Left colon (tissue), 2 donors: ENCODE measurements at regions of chr13 and their contacts with region 1.

Region 1: DNA sequence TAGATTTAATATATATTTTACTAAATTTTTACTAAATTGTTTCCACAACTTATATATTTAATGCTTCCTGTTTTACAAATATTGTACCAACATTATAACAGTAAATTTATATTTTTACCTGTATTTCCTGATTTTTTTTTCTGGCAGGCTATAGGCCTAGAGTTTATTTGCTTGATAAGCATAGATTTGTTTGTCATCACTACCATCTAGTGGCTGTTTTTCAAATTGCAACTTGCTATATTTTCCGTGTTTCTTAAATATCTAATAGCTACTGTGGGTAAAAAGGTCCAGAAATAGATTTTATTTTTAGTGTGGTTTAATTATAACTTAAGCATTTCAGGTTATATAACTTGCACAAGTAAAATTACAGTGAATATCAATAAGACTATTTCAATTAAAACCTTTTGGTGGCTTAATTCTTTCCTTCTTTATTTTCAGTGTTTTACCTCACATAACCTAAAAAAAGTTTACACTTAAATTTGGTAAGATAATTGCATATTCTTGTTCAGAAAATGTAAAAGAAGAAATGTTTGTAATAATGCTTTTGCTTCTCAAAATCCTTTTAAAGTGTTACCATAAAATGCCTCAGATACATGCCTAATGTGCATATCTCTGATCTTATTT is 60.6 kb downstream of the NDFIP2 start:
- DNase-seq: no peak
- ATAC-seq: peak; percentile 58

Region 2: DNA sequence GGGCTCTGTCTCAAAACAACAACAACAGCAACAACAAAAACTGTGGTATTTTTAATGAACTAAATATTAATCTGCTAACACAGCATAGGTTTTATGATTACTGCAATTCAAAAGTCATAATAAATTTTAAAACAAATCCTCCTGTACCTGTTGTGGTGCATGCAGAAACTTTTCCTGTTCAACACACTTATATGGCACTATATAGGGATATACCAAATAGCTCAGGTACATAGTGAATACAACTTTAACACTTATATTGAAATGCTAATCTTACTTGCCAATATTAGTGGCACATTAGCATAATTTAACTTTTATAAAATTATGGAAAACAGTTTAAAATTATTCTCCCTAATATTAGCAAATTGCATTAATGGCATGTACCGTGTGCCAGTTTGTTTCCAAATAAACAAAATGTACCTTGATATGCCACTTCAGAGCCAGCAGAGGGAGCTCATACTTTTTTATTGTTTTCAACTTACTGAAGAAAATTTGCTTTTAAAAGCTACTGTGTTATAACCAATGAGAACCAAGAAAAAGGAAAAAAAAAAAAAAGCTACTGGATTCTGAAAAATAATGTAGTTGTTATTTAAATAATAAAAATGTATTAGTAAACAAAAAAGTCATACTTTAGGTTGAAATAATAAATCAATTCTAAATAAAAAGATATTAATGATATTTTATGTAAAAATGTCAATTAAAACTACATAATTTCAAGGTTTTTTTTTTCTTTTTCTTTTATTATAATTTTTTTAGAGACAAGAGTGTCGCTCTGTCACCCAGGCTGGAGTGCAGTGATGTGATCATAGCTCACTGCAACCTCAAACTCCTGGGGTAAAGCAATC is 117.5 kb before region 1 on chr13:
- intact Hi-C with region 1: loop called (anchors 5 kb)
- DNase-seq: no peak
- ATAC-seq: peak; percentile 77